ENCODE measurements at regions of chr14 and their contacts with region 1.

Region 1: DNA sequence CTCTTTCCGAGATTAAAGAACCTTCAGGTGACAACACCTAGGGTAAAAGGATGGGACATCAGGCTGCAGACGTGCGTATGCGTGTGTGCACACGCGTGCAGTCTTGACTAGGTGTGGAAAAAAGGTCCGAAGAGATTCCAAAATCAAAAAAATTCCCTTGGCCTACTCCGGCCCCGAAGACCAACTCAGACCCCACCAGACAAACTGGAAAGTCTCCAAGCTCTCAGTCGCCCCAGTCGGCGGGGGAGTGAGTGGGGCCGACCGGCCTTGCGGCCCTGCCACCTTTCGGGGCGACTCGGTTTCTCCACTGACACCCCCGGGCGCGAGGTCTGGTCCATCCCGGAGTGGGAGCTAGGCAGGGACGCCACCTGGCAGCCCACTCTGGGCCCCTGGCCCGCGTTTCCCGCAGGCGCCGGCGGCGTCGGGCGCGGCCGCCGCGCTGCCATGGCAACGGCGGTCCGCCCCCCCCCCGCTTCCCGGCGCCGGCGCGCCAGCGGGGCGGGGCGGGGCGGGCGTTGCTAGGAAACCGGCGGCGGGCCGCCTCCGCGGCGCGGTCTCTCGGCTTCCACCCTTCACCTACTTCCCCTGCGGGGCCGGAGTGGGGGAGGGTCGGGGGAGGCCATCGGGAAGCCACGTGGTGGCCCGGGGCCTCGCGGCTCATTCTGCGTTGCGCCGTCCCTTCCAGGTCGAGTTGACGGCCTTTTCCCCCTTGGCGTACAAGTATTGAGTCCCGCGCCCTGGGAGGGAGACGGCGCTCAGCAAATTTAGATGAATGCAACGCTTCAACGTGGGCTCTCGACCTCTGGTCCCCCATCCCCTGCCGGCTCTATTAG is 253.1 kb downstream of the EFCAB11 start:
- DNase-seq: peak; percentile 62
- ATAC-seq: peak; percentile 94
- H3K4me3 ChIP-seq: peak overlapping the region; percentile 69
- H3K27ac ChIP-seq: peak overlapping the region; percentile 68
- H3K4me1 ChIP-seq: peaks cover 5% of the 10 kb centered on the region
- H3K27me3 ChIP-seq: no peaks in the 10 kb centered on the region
- CTCF ChIP-seq: no peak
- POLR2A ChIP-seq: no peak
- RAD21 ChIP-seq: peak; percentile 9; the same call in 1 of the 2 replicates

Region 2: GRCh38 chr14:89416002-89416995 is 285.1 kb before region 1 on chr14:
- CTCF ChIA-PET with region 1: no interaction called
- POLR2A ChIA-PET with region 1: no interaction called
- dilution Hi-C with region 1: no loop called
- in situ Hi-C with region 1: no loop called
- intact Hi-C with region 1: loop called (anchors 5 kb)
- DNase-seq: peak; percentile 97
- ATAC-seq: peak; percentile 81
- H3K4me3 ChIP-seq: peak overlapping the region; percentile 62
- H3K27ac ChIP-seq: peak overlapping the region; percentile 60
- H3K4me1 ChIP-seq: peaks cover 12% of the 10 kb centered on the region
- H3K27me3 ChIP-seq: no peaks in the 10 kb centered on the region
- CTCF ChIP-seq: no peak
- POLR2A ChIP-seq: peak; percentile 69
- RAD21 ChIP-seq: no peak; the same call in 1 of the 2 replicates

Region 3: DNA sequence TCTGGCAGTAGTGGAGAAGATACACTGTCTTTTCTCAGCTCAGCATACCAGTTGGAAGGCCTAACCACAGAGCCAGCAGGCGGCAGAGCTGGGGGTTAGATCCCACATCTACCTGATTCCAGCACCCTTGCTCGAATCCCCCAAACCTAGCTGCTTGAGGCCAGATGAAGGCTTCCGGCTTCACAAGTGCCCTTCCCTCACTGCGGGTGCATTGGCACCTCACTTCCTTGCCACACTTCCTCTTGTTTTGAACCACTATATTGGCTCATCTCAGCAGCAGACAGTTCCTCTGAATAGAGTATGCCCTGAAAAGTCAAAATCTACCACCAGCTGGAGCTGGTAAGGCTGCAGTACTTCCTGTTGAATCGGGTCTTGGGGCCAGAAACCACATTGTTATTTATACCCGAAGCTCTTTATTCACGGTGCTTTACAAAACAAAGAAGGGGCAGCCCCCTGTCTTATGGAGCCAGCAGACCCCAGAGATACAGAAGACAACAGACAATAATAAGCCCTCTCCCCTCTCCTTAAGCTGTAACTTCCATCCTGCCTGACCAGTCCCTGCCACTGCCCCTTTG is 19.4 kb after region 1 on chr14:
- CTCF ChIA-PET with region 1: no interaction called
- POLR2A ChIA-PET with region 1: no interaction called
- dilution Hi-C with region 1: no loop called
- in situ Hi-C with region 1: no loop called
- intact Hi-C with region 1: loop called (anchors 1 kb)
- DNase-seq: no peak
- ATAC-seq: peak; percentile 56; the same call in 1 of the 2 replicates
- H3K4me3 ChIP-seq: no peak overlapping the region
- H3K27ac ChIP-seq: no peak overlapping the region
- H3K4me1 ChIP-seq: no peaks in the 10 kb centered on the region
- H3K27me3 ChIP-seq: no peaks in the 10 kb centered on the region
- CTCF ChIP-seq: no peak
- POLR2A ChIP-seq: no peak
- RAD21 ChIP-seq: no peak

Measured in IMR-90 (cell line).